ENCODE measurements at regions of chr15 and their contacts with region 1.

Region 1: GRCh38 chr15:40274350-40275274 is 8.3 kb downstream of the ANKRD63 start:
- DNase-seq: peak; percentile 71
- H3K27ac ChIP-seq: peak overlapping the region; percentile 22
- CTCF ChIP-seq: peak; percentile 100

Region 2: DNA sequence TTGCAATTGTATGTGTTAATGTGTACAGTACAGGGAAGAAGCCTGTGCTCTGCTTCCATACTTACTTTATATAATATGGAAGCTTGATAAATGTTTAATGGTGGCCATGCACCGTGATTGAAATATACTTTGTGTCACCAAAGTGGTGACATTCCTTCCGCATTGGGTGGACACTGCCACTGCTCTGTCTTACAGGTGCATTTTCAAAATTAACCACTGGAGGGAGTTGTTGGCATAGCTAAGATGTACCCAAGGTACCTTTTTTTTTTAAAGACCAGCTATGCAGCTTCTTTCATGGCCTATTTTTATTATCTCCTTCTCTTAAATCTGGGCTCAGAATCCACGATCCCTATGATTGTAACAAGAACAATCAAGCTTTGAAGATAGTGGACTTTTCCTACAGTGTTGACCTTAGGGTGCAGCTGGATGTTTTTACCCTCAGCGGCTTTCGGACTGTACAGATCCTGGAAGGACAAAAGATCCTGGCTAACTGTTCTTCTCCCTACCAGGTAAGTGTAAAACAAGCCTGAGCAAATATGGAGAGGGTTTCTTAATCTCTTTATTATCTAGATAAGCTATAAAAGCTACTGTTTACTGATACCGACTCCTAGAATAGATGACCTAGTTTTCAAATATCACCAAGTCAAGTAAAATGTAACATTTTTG is 57.3 kb before region 1 on chr15:
- CTCF ChIA-PET with region 1: interaction called, 112 read pairs
- POLR2A ChIA-PET with region 1: no interaction called
- DNase-seq: peak; percentile 50
- H3K27ac ChIP-seq: no peak overlapping the region
- CTCF ChIP-seq: peak; percentile 94

Region 3: GRCh38 chr15:40238532-40239403 is 35.8 kb before region 1 on chr15 and contains the start of gene PAK6:
- CTCF ChIA-PET with region 1: interaction called, 50 read pairs
- POLR2A ChIA-PET with region 1: no interaction called
- DNase-seq: peak; percentile 97
- H3K27ac ChIP-seq: peak within 1 kb of the TSS; percentile 100
- CTCF ChIP-seq: no peak

Region 4: DNA sequence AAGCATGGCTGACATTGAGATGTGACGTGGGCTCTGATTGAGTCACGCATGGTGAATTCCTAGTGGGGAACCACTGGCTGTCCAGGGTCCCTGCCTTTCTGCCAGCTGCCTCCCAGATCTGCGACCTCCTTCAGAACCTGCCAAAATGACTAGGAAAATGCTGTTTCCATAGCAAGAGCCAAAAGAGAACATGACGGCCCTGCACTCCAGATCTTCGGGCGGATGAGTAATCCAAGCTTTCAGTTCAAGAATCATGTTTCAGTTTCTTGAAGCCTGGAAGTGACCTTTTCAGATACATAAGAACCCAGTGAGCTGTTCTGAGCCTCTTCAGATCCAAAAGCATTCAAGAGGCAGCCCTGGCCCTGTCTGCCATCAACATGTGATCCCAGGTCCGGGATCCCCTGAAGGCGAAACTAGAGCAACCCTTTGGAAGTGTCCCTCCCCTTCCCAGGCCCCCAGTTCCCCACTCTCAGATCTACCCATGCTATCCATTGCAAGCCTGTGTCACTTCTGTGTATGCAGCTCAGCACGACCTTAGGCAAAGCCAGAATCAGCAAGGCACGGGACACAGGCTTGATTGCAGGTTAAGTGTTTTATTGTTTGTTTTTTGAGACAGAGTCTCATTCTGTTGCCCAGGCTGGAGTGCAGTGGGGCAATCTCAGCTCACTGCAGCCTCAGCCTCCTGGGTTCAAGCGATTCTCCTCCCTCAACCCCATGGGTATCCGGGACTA is 11.4 kb before region 1 on chr15:
- CTCF ChIA-PET with region 1: interaction called, 11 read pairs
- POLR2A ChIA-PET with region 1: no interaction called
- DNase-seq: no peak
- H3K27ac ChIP-seq: peak overlapping the region; percentile 51
- CTCF ChIP-seq: no peak

Region 5: GRCh38 chr15:40421246-40422157 is 146.9 kb after region 1 on chr15:
- CTCF ChIA-PET with region 1: interaction called, 22 read pairs
- POLR2A ChIA-PET with region 1: no interaction called
- DNase-seq: peak; percentile 69
- H3K27ac ChIP-seq: peak overlapping the region; percentile 67
- CTCF ChIP-seq: peak; percentile 95

Measured in RWPE1 (cell line).